ENCODE measurements at regions of chr2 and their contacts with region 1.

Region 1: GRCh38 chr2:120174963-120175581 is 48.1 kb downstream of the TMEM185B start:
- DNase-seq: peak in 1 of 2 donors; percentile 35
- ATAC-seq: peak in 1 of 8 donors; percentile 45
- H3K4me3 ChIP-seq: no peak overlapping the region
- H3K27ac ChIP-seq: no peak overlapping the region
- H3K4me1 ChIP-seq: peaks cover 0 to 24% (median 13%) of the 10 kb centered on the region in 9 donors
- H3K27me3 ChIP-seq: no peaks in the 10 kb centered on the region
- CTCF ChIP-seq: peak; percentile 51 to 87 (median 80)

Region 2: DNA sequence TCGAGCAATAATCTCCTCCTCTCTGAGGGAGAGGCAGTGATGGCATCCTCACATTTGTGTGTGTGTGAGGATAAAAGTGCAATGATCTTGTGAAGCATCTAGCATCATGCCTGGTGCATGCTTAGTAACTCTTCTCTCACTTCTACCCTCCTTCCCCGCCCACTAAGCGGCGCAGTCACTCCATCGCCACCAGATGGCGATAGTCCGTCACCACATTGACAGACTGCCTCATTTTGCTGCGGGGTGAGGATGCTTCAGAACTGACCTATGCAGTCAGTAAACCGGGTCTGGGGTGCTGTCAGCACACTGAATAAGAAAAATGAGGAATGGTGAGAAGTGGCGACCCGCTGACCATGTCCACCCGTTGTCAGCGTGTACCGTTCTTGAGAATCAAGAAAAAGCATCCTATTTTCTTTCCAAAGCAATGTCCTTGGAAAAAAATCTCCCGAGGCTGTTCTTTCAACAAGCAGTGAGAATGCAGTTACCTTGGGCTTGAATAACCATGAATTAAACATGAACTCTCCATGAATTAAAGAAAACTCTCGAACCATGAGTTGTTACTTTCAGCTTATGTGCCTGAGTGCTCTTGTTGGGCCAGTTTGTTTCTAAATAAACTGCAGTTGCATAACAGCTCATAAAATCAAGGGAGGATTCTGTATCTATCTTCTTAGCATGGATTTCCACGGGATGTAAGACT is 533.4 kb before region 1 on chr2:
- intact Hi-C with region 1: loop called in 3 of 10 experiments (anchors 5 to 10 kb)
- DNase-seq: peak; percentile 63 to 66
- ATAC-seq: peak; percentile 75 to 91 (median 84)
- H3K4me3 ChIP-seq: no peak overlapping the region
- H3K27ac ChIP-seq: no peak overlapping the region
- H3K4me1 ChIP-seq: peaks cover 0 to 22% (median 6%) of the 10 kb centered on the region in 9 donors
- H3K27me3 ChIP-seq: peaks cover 0 to 8% (median 0%) of the 10 kb centered on the region in 7 donors
- CTCF ChIP-seq: peak; percentile 69 to 97 (median 94)

Region 3: GRCh38 chr2:119702918-119703401 is 472.1 kb before region 1 on chr2:
- intact Hi-C with region 1: loop called in 7 of 10 experiments (anchors 2 to 5 kb)
- DNase-seq: peak; percentile 59 to 63
- ATAC-seq: peak; percentile 79 to 91 (median 89)
- H3K4me3 ChIP-seq: no peak overlapping the region
- H3K27ac ChIP-seq: no peak overlapping the region
- H3K4me1 ChIP-seq: peaks cover 0 to 23% (median 5%) of the 10 kb centered on the region in 9 donors
- H3K27me3 ChIP-seq: no peaks in the 10 kb centered on the region
- CTCF ChIP-seq: peak; percentile 87 to 97 (median 92)

Region 4: GRCh38 chr2:119753041-119753929 is 421.8 kb before region 1 on chr2:
- intact Hi-C with region 1: loop called in 7 of 10 experiments (anchors 2 to 10 kb)
- DNase-seq: no peak
- ATAC-seq: peak; percentile 36 to 80 (median 70)
- H3K4me3 ChIP-seq: no peak overlapping the region
- H3K27ac ChIP-seq: no peak overlapping the region
- H3K4me1 ChIP-seq: peaks cover 0 to 23% (median 0%) of the 10 kb centered on the region in 9 donors
- H3K27me3 ChIP-seq: no peaks in the 10 kb centered on the region
- CTCF ChIP-seq: peak; percentile 53 to 88 (median 73)

Region 5: GRCh38 chr2:119838179-119838578 is 336.9 kb before region 1 on chr2:
- intact Hi-C with region 1: loop called in 1 of 10 experiments (anchors 10 kb)
- DNase-seq: no peak
- ATAC-seq: no peak
- H3K4me3 ChIP-seq: no peak overlapping the region
- H3K27ac ChIP-seq: no peak overlapping the region
- H3K4me1 ChIP-seq: peaks cover 0 to 20% (median 9%) of the 10 kb centered on the region in 9 donors
- H3K27me3 ChIP-seq: no peaks in the 10 kb centered on the region
- CTCF ChIP-seq: no peak

Region 6: DNA sequence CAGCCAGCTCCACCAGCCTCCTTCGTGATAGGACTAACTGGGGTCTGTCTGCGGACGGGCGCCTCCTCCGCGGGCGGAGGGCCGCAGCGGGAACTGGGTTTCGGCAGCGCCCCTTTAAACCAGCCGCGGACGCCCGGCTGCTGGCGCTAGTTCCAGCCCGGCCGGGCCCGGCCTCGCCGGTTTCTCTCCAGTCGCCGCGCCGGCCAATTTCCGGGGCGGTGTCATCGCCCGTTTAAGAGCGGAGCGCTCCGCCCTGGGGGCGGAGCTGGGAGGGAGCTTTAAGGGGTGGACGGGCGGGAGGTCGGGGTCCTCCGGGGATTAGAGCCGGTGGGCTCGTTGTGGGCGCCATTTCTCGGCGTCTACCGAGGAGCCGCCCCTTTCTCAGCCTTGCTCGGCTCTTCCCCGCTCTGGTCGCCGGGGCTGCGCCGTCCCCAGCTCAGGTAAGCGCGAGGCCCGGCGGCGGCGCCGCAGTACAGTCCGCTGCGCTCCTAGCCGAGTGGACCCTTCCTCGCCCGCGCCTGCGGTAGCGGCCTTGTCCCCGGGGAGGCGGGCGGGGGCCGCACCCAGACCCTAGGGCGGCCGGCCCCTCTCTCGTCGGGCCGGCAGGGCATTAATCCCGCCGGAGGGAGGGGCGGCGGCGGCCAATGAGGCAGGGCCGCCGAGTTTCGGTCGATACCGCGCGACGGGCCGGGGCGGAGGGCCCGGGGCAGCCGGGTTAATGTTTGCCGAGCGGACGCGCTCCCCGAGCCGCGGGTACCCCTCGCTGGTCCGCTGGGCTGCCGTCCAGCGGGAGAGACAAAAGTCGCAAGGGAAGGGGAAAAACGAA is 162.1 kb before region 1 on chr2 and contains the start of gene EPB41L5:
- intact Hi-C with region 1: loop called in 1 of 10 experiments (anchors 10 kb)
- DNase-seq: peak; percentile 89 to 95
- ATAC-seq: peak; percentile 97 to 99 (median 99)
- H3K4me3 ChIP-seq: peak within 1 kb of the TSS; percentile 57 to 98 (median 94)
- H3K27ac ChIP-seq: peak within 1 kb of the TSS; percentile 70 to 90 (median 86)
- H3K4me1 ChIP-seq: peaks cover 0 to 26% (median 7%) of the 10 kb centered on the region in 9 donors
- H3K27me3 ChIP-seq: peaks cover 0 to 9% (median 0%) of the 10 kb centered on the region in 7 donors
- CTCF ChIP-seq: peak in 3 of 9 donors; percentile 5 to 28 (median 15)
- total RNA-seq, gene EPB41L5: 8.4 to 18.8 (median 14.3) TPM

Region 7: DNA sequence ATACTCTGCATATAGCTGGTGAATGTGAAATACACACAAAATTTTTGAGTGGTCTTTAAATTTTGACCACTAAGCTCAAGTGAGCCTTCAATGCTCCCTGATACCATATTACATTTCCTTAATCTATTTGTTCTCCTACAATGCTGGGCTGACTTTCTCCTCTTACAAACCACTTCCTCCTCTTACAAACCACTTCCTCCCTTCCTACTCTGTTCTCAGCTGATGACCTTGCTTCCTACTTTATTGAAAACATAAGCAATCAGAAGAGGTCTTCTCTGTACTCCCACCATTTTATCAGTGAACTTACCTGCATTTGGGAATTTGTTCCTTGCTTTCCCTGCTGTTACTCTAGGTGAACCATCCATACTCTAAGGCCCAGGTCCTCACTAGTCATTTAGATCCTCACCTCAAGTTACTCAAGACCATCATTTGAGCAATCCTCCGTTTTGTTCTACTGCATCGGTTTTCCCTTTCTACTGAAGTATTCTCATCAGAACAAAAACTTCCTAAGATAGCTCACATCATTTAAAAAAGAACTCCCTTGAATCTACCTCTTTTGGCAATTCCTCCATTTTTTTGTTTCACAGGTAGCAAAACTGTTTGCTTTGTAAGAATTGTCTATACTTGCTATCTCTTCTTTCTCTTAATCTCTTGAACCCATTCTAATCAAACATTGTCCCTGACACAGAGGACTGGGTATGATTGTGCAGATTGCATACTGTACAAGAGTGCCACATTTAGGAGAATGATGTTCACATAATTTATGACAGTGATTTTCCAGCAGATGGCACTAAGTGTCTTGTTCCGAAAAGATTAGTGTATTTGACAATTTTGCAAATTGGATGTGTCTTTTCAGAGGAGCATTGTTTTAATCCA is 65.6 kb before region 1 on chr2:
- intact Hi-C with region 1: loop called in 4 of 10 experiments (anchors 2 to 5 kb)
- DNase-seq: peak in 1 of 2 donors; percentile 6
- ATAC-seq: peak in 7 of 8 donors; percentile 15 to 64 (median 51)
- H3K4me3 ChIP-seq: no peak overlapping the region
- H3K27ac ChIP-seq: peak overlapping the region in 1 of 10 donors; percentile 46
- H3K4me1 ChIP-seq: peaks cover 0 to 37% (median 21%) of the 10 kb centered on the region in 9 donors
- H3K27me3 ChIP-seq: peaks cover 0 to 4% (median 0%) of the 10 kb centered on the region in 7 donors
- CTCF ChIP-seq: peak in 8 of 9 donors; percentile 23 to 65 (median 52)

Region 8: GRCh38 chr2:120134263-120134662 is 40.8 kb before region 1 on chr2:
- intact Hi-C with region 1: no loop called
- DNase-seq: no peak
- ATAC-seq: no peak
- H3K4me3 ChIP-seq: no peak overlapping the region
- H3K27ac ChIP-seq: no peak overlapping the region
- H3K4me1 ChIP-seq: no peaks in the 10 kb centered on the region
- H3K27me3 ChIP-seq: no peaks in the 10 kb centered on the region
- CTCF ChIP-seq: no peak

Region 9: GRCh38 chr2:120379916-120380893 is 205.1 kb after region 1 on chr2:
- intact Hi-C with region 1: no loop called
- DNase-seq: no peak
- ATAC-seq: no peak
- H3K4me3 ChIP-seq: no peak overlapping the region
- H3K27ac ChIP-seq: no peak overlapping the region
- H3K4me1 ChIP-seq: no peaks in the 10 kb centered on the region
- H3K27me3 ChIP-seq: peaks cover 0 to 49% (median 34%) of the 10 kb centered on the region in 7 donors
- CTCF ChIP-seq: no peak